ENCODE measurements at regions of chrX and their contacts with region 1.

Region 1: GRCh38 chrX:134780912-134781311 is 122.6 kb upstream of the PLAC1 start:
- DNase-seq: no peak
- H3K4me3 ChIP-seq: no peak overlapping the region
- H3K4me3 Mint-ChIP-seq: no peak overlapping the region
- H3K27ac ChIP-seq: no peak overlapping the region
- H3K27ac Mint-ChIP-seq: no peak overlapping the region
- H3K4me1 ChIP-seq: no peaks in the 10 kb centered on the region
- H3K4me1 Mint-ChIP-seq: no peaks in the 10 kb centered on the region
- H3K27me3 ChIP-seq: no peaks in the 10 kb centered on the region
- H3K27me3 Mint-ChIP-seq: no peaks in the 10 kb centered on the region

Region 2: DNA sequence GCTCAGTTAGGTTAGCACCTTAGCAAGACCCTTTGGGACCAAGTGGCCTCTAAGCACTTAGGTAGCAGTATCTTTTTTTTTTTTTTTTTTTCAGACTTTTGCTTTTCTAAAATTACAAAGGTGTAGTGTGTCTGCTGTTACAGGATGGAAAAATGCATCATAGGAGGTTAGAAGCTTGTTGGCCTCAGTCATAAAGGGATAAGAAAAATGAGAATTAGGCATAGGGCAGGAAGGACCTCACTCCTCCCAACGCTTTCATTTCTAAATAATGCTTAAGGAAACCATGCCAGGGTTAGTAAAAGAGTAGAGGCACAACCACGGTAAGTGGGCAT is 25.8 kb after region 1 on chrX:
- CTCF ChIA-PET with region 1: no interaction called
- POLR2A ChIA-PET with region 1: interaction called, 13 read pairs
- DNase-seq: no peak
- H3K4me3 ChIP-seq: peak overlapping the region; percentile 98
- H3K4me3 Mint-ChIP-seq: peak overlapping the region; percentile 87 to 97 (median 93)
- H3K27ac ChIP-seq: peak overlapping the region; percentile 97
- H3K27ac Mint-ChIP-seq: peak overlapping the region; percentile 91 to 99 (median 98)
- H3K4me1 ChIP-seq: no peaks in the 10 kb centered on the region
- H3K4me1 Mint-ChIP-seq: peaks cover 18 to 34% (median 26%) of the 10 kb centered on the region in 3 donors
- H3K27me3 ChIP-seq: no peaks in the 10 kb centered on the region
- H3K27me3 Mint-ChIP-seq: peaks cover 0 to 5% of the 10 kb centered on the region in 2 donors